PC-3 (cell line): ENCODE measurements at regions of chr9 and their contacts with region 1.

Region 1: GRCh38 chr9:72526901-72527800 is 5.7 kb downstream of the TMC1 start:
- DNase-seq: peak; percentile 84
- ATAC-seq: peak; percentile 74
- H3K4me3 ChIP-seq: peak overlapping the region; percentile 50
- H3K27ac ChIP-seq: peak overlapping the region; percentile 73
- H3K4me1 ChIP-seq: peaks cover 39% of the 10 kb centered on the region
- H3K27me3 ChIP-seq: no peaks in the 10 kb centered on the region
- CTCF ChIP-seq: no peak

Region 2: DNA sequence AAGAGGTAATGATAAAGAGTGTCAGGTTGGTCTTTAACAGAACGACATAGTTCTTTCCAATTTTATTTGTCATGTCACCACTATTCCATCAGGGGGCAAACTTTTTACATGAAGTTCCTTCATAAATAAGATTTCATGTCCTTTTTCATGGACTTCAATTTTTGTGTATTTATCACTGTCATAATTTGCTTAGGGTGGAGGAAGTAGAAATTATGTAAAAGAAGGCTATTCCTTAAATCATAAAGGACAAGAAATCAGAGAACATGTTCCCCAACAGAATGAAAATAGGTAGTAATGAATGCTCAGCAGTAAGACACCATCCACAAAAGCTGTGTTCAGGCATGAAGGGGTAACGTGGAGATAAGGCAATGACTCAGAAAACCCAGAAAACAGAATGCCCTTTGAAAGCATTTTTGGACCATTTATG is 234.9 kb before region 1 on chr9:
- CTCF ChIA-PET with region 1: no interaction called
- POLR2A ChIA-PET with region 1: no interaction called
- intact Hi-C with region 1: loop called (anchors 1 kb)
- DNase-seq: peak; percentile 59
- ATAC-seq: peak; percentile 37
- H3K4me3 ChIP-seq: no peak overlapping the region
- H3K27ac ChIP-seq: no peak overlapping the region
- H3K4me1 ChIP-seq: peaks cover 10% of the 10 kb centered on the region
- H3K27me3 ChIP-seq: no peaks in the 10 kb centered on the region
- CTCF ChIP-seq: peak; percentile 58

Region 3: DNA sequence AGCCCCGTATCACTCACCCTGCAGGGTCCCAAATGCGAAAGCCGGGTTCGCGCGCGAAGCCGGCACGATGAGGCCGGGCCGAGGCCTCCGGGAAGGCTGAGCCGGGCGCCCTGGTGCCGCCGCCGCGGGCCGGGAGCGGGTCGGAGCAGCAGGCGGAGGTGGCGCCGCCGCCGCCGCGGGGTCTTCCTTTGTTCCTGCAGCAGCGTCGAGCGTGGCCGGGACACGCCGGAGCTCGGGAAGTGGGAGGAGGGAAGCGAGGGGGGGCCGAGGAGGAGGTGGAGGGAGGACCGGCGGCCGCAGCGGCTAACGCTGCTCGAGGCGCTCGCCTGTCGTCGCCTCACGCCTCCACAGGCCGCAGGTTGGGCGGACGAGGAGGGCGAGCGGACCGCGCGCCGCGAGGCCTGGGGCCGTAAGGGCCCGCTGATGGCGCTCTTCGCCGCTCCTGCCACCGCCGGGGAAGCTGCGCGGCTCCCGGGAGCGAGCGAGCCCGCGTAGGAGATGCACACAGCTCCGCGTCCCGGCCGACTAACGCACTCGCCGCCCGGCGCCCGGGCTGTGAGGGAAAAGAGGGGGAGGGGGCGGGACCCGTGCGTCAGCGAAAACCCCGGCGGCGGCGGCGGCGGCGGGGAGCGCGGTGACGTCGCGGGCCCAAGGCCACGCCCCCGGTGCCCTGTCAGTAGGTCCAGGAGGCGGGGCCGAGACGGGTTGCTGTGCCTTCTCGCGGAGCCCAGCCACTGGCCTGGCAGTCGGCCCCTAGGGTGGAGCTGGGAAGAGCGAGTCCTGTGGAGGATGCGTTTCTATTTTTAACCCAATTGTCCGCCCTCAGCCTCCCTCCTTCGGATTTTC is 162.2 kb before region 1 on chr9 and contains the start of gene ZFAND5:
- CTCF ChIA-PET with region 1: no interaction called
- POLR2A ChIA-PET with region 1: interaction called, 6 read pairs
- intact Hi-C with region 1: loop called (anchors 1 kb)
- DNase-seq: peak; percentile 93
- ATAC-seq: peak; percentile 85
- H3K4me3 ChIP-seq: peak within 1 kb of the TSS; percentile 98
- H3K27ac ChIP-seq: peak within 1 kb of the TSS; percentile 98
- H3K4me1 ChIP-seq: peaks cover 19% of the 10 kb centered on the region; the same call in 1 of the 2 replicates
- H3K27me3 ChIP-seq: no peaks in the 10 kb centered on the region
- CTCF ChIP-seq: no peak
- total RNA-seq, gene ZFAND5: 84.1 and 88.8 TPM in 2 replicates

Region 4: GRCh38 chr9:72476617-72477375 is 50.4 kb before region 1 on chr9:
- CTCF ChIA-PET with region 1: no interaction called
- POLR2A ChIA-PET with region 1: no interaction called
- intact Hi-C with region 1: loop called (anchors 5 kb)
- DNase-seq: peak; percentile 97
- ATAC-seq: peak; percentile 91
- H3K4me3 ChIP-seq: no peak overlapping the region
- H3K27ac ChIP-seq: peak overlapping the region; percentile 58
- H3K4me1 ChIP-seq: peaks cover 45% of the 10 kb centered on the region
- H3K27me3 ChIP-seq: no peaks in the 10 kb centered on the region
- CTCF ChIP-seq: no peak

Region 5: DNA sequence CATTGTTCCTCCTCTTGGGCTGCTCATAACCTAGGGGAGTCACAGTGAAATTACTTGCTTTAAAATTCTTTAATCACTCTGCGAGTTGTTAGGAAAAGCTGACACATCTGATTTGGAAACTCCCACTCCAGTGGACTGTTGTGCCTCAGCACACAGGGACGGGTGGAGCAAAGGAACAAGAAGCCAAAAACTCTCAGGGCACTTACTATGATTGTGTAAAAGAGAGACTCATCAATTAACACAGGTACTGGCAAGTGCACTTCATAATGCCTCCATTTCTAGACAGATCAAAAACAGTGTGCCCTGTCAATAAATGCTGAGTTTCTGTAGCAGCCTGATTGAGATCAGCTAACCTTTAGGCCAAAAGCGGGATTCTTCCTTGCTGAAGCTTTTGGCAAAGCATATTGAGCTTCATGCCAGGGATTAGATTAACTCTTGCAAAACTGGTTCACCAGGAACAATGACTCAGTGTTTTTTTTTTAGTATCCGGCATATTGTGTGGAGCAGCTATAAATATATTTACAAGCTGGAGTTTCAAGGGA is 50.1 kb after region 1 on chr9:
- CTCF ChIA-PET with region 1: no interaction called
- POLR2A ChIA-PET with region 1: interaction called, 8 read pairs
- intact Hi-C with region 1: loop called (anchors 2 kb)
- DNase-seq: peak; percentile 93
- ATAC-seq: peak; percentile 27
- H3K4me3 ChIP-seq: peak overlapping the region; percentile 33
- H3K27ac ChIP-seq: peak overlapping the region; percentile 94
- H3K4me1 ChIP-seq: peaks cover 71% of the 10 kb centered on the region
- H3K27me3 ChIP-seq: no peaks in the 10 kb centered on the region
- CTCF ChIP-seq: no peak

Region 6: GRCh38 chr9:73149371-73150067 is 622.4 kb after region 1 on chr9:
- CTCF ChIA-PET with region 1: no interaction called
- POLR2A ChIA-PET with region 1: interaction called, 5 read pairs
- intact Hi-C with region 1: loop called (anchors 5 kb)
- DNase-seq: peak; percentile 79
- ATAC-seq: peak; percentile 23
- H3K4me3 ChIP-seq: peak overlapping the region; percentile 52
- H3K27ac ChIP-seq: peak overlapping the region; percentile 90
- H3K4me1 ChIP-seq: peaks cover 63% of the 10 kb centered on the region
- H3K27me3 ChIP-seq: no peaks in the 10 kb centered on the region
- CTCF ChIP-seq: no peak